ENCODE measurements at regions of chr17 and their contacts with region 1.

Region 1: DNA sequence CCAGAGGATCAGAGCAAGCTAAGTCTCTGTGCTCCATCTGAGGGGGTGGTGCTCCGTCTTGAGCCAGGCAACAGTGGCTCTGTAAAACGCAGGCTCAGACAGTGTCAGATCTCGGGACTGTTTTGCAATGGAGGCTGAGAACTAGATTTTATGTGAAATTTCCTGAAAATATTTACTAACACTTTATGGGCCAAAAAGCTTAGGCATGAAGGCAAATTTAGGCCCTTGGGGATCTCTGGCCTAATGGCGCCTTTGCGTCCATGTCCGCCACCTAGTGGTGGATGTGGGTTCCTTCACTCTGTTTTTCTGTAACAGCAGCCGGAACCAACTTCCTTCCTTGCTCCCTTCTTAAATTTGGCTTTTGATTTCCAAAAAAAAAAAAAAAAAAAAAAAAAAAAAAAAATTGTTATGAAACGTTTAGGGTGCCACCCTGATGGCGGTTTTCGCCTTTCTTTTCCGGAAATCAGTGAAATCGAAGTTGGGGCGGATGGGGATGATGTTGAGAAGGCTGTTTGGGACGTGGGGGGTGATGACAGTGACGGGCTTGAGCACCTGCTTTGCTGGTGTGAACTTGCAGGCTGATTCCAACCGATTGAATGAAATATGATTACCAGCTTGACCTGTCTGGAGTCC is 14.0 kb upstream of the ELAC2 start:
- DNase-seq: peak; percentile 52
- H3K4me3 Mint-ChIP-seq: no peak overlapping the region
- H3K27ac Mint-ChIP-seq: no peak overlapping the region
- H3K4me1 Mint-ChIP-seq: peaks cover 6% of the 10 kb centered on the region
- H3K27me3 Mint-ChIP-seq: peaks cover 8% of the 10 kb centered on the region

Region 2: GRCh38 chr17:12974005-12974531 is 57.8 kb before region 1 on chr17:
- CTCF ChIA-PET with region 1: no interaction called
- POLR2A ChIA-PET with region 1: no interaction called
- DNase-seq: no peak
- H3K4me3 Mint-ChIP-seq: no peak overlapping the region
- H3K27ac Mint-ChIP-seq: no peak overlapping the region
- H3K4me1 Mint-ChIP-seq: no peaks in the 10 kb centered on the region
- H3K27me3 Mint-ChIP-seq: peaks cover 11% of the 10 kb centered on the region

Region 3: DNA sequence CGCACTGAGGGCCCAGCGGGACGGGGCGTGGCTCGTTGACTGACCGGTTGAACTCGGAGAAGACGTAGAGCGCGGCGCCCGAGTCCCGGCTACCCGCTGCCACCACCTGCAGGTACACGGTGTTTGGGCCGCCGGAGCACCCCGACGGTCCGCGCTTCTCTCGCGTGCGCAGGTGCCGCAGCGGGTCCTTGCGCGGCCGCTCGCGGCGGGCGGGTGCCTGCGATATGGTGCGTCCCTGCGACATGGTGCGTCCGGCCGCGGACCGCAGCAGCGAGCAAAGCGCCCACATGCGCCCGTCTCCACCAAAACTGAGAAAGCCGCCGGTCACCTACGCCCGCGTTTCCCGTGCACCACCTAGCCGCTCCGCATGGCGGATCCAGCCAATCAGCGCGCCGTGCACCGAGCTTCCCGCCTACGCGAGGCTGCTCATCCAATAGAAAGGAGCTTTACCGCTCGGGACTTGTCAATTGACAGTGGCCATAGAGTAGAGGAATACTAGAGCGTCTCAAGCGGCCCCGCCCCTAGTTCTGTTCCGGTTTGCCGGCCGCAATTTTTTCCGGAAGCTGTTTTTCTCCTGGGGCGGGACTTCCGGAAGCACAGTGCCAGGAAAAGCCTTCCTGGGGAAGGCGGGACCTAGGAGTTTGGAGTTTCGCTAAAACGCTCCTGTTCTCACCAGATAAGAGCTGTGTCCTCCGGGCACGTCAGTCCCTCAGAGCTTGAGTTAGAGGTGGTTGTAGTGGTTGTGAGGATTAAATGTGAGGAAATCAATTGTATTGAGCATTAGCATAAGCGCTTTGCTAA is 14.0 kb before region 1 on chr17 and contains the start of gene ELAC2:
- CTCF ChIA-PET with region 1: interaction called, 46 read pairs
- POLR2A ChIA-PET with region 1: interaction called, 3 read pairs
- DNase-seq: peak; percentile 97
- H3K4me3 Mint-ChIP-seq: peak within 1 kb of the TSS; percentile 97
- H3K27ac Mint-ChIP-seq: peak within 1 kb of the TSS; percentile 96
- H3K4me1 Mint-ChIP-seq: peaks cover 27% of the 10 kb centered on the region
- H3K27me3 Mint-ChIP-seq: no peaks in the 10 kb centered on the region
- total RNA-seq, gene ELAC2: 60.8 to 74.8 TPM

Region 4: GRCh38 chr17:13055131-13055530 is 23.3 kb after region 1 on chr17:
- CTCF ChIA-PET with region 1: no interaction called
- POLR2A ChIA-PET with region 1: no interaction called
- DNase-seq: no peak
- H3K4me3 Mint-ChIP-seq: no peak overlapping the region
- H3K27ac Mint-ChIP-seq: no peak overlapping the region
- H3K4me1 Mint-ChIP-seq: no peaks in the 10 kb centered on the region
- H3K27me3 Mint-ChIP-seq: no peaks in the 10 kb centered on the region